Activated naive CD8-positive, alpha-beta T cell treated with anti-CD3 and anti-CD28 coated beads, Interleukin-2, amount 10 ng/mL, durations not matched to agents 7 days and 5 days (primary cell): ENCODE measurements at regions of chr18 and their contacts with region 1.

Region 1: DNA sequence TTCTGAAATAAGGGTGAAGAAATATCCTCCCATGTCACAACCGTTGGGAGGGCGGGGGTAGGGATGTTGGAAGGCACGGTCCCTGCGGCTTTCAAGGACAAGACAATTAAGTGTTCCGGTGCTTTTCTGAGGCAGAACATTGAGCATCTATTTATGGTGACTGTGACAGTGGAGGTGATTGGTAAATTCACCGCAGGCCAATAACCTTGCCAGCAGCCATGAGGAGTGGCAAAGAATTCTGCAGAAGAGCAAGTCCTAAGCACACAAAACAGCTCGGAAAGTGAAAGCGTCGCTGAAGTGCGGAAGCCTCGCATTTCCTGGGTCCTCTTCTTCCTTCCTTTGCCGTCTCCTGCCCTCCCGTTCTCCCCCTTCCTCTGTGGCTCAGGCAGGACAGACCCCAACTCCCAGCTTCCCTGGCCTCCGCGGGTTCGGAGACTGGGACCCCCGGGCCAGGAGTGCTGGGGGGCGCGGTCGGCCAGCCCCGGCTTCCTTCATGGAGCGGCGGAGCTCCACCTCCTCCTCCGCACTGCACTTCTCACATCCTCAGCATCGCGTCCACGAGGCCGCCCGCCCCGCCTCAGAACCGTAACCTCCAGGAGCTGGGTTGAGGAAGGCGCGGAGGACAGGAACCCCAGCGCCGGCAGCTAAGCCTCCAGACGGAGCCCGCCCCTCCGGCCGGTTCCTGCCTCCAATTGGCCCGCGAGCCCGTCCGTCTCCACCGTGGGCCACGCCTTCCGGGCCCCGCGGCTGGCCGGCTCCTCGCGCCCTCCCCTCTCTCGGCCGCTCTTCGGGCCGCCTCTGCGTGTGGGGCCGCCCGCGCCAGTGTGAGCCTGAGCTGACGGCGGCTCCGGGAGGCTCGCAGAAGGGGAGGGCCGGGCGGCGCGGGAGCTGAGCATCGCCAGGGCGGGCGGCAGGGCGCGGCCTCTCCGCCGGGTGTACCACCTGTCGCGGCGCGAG is at the start of gene ME2:
- DNase-seq: peak; percentile 98
- ATAC-seq: peak; percentile 92
- H3K4me3 Mint-ChIP-seq: peak within 1 kb of the TSS; percentile 99
- H3K27ac Mint-ChIP-seq: peak within 1 kb of the TSS; percentile 98
- H3K4me1 Mint-ChIP-seq: peaks cover 15% of the 10 kb centered on the region
- H3K27me3 Mint-ChIP-seq: peaks cover 4% of the 10 kb centered on the region
- total RNA-seq, gene ME2: 76.3 to 76.7 TPM

Region 2: GRCh38 chr18:50819728-50820378 is 58.8 kb before region 1 on chr18 and contains the start of gene MRO:
- POLR2A ChIA-PET with region 1: interaction called, 12 read pairs
- DNase-seq: peak; percentile 84
- ATAC-seq: peak; percentile 98
- H3K4me3 Mint-ChIP-seq: no peak within 1 kb of the TSS
- H3K27ac Mint-ChIP-seq: no peak within 1 kb of the TSS
- H3K4me1 Mint-ChIP-seq: no peaks in the 10 kb centered on the region
- H3K27me3 Mint-ChIP-seq: peaks cover 14% of the 10 kb centered on the region
- total RNA-seq, gene MRO: not detected

Region 3: DNA sequence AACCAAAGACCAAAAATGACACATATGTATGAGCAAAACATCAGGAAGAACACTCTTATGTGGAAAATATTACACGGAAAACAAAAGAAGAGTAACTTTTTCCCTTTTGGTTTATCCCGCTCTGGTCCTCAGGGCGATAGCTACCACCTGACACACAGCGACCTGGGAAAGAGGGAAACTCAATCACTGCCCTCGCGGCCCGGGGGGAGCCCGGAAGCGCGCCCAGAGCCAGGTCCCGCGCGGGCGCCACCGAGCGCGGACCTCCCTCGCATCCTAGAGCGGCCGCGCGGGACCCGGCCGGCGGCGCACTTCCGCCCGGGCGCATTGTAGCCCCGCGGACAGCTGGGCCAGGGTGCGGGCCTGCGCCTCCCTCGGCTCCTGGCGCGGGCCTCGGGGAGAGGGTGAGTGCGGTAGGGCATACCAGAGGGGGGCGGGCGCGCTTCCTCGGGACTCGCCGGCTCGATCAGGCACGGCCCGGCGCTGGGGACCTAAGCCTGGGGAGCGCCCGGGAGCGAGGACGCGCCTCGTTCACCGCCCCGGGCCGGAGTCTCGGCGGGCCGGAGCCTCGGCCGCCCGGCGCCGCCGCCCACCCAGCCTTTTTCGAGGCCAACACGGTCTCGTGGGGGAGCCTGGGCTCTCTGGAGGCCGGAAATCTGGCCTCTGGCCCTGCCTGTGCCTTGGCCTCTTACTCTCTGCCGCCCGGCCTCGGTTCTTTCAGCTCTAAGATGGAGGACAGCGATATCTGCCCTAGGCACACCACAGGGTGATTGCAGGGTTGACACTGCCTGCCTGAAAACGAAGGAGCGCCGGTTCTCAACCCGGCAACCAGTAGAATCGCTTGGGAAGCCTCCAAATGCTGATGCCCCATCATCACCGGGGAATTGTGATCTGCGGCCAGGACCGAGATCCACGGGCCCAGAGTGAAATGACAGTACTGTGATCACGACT is 89.4 kb after region 1 on chr18 and contains the start of gene ELAC1:
- POLR2A ChIA-PET with region 1: interaction called, 42 read pairs
- DNase-seq: peak; percentile 83
- ATAC-seq: peak; percentile 94
- H3K4me3 Mint-ChIP-seq: peak within 1 kb of the TSS; percentile 92
- H3K27ac Mint-ChIP-seq: peak within 1 kb of the TSS; percentile 93
- H3K4me1 Mint-ChIP-seq: peaks cover 17% of the 10 kb centered on the region
- H3K27me3 Mint-ChIP-seq: peaks cover 3% of the 10 kb centered on the region
- total RNA-seq, gene ELAC1: 9.6 to 10.1 TPM

Region 4: DNA sequence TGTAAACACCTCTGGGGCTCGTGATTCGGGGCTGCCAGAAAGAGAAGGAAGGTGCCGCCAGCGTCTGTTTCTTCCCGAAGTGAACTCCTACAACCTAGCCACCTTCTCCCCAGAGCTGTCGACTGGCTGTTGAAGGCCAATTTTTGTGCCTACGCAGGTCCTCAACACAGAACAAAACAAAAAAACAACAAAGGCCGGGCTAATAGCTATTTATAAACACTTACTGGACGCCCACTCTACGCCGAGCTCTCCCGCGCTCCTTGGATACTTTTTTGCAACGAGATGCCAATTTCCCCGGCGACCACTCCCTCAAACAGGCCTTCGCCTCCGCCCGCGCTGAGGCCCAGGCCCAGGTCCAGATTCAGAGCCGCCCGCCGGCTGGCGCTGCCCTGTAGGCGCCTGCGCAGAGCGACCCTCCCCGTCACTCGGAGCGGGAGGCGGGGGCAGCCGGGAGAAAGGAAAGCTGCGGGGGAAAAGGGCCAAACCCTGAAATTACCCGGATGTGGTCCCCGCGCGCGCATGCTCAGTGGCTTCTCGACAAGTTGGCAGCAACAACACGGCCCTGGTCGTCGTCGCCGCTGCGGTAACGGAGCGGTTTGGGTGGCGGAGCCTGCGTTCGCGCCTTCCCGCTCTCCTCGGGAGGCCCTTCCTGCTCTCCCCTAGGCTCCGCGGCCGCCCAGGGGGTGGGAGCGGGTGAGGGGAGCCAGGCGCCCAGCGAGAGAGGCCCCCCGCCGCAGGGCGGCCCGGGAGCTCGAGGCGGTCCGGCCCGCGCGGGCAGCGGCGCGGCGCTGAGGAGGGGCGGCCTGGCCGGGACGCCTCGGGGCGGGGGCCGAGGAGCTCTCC is 151.3 kb after region 1 on chr18 and contains the start of gene SMAD4:
- POLR2A ChIA-PET with region 1: interaction called, 58 read pairs
- DNase-seq: peak; percentile 98
- ATAC-seq: peak; percentile 87
- H3K4me3 Mint-ChIP-seq: peak within 1 kb of the TSS; percentile 100
- H3K27ac Mint-ChIP-seq: peak within 1 kb of the TSS; percentile 99
- H3K4me1 Mint-ChIP-seq: peaks cover 44% of the 10 kb centered on the region
- H3K27me3 Mint-ChIP-seq: no peaks in the 10 kb centered on the region
- total RNA-seq, gene SMAD4: 84.9 to 105 TPM

Region 5: GRCh38 chr18:51197661-51198424 is 319.2 kb after region 1 on chr18 and contains the start of gene MEX3C:
- POLR2A ChIA-PET with region 1: interaction called, 11 read pairs
- DNase-seq: peak; percentile 98
- ATAC-seq: peak; percentile 84
- H3K4me3 Mint-ChIP-seq: peak within 1 kb of the TSS; percentile 94
- H3K27ac Mint-ChIP-seq: peak within 1 kb of the TSS; percentile 97
- H3K4me1 Mint-ChIP-seq: peaks cover 24% of the 10 kb centered on the region
- H3K27me3 Mint-ChIP-seq: no peaks in the 10 kb centered on the region
- total RNA-seq, gene MEX3C: 53.3 to 60.7 TPM